ENCODE measurements at regions of chr10 and their contacts with region 1.

Region 1: DNA sequence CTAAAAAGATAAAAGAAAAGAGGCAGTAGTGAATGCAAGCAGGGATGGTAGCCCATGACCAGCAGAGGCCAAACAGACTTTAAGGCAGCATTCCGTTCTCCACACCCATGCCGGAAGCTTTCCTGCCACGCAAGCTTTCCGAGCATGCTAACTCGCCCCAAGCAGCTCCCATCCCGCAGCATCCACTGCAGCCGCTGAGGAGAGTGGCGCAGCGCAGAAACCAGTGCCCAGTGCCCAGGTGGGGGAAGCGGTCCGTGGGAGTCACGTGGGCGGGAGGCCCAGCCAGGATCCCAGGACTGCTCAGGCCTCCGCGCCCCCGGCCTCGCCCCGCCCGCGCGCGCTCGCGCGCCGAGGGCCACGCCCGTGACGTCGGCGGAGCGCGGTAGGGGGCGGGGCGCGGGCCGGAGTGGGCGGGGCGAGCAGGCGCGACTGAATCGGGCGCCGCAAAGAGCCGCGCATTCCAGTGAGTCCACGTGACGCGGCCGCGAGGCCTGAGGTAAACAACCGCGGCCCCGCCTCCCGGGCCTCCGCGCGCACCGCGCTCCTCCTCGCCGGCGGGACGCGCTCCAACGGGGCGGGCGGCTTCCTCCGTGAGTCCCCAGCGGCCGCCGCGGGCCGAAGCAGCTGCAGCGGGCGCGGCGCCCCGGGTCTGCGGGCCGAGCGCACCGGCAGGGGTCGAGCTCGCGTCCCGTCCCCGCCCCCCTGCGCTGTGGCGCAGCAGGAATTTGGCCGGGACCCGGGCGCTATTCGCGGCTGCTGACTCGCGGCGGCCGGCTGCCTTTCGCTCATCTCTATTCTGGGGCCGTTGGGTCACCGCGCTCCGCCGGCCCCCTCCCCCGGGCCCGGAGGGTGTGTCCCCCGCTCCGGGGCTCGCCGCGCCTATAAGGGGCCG is at the start of gene OTUD1:
- DNase-seq: peak; percentile 96
- H3K4me3 ChIP-seq: peak within 1 kb of the TSS; percentile 93
- H3K27ac ChIP-seq: peak within 1 kb of the TSS; percentile 45
- H3K4me1 ChIP-seq: peaks cover 32% of the 10 kb centered on the region
- CTCF ChIP-seq: no peak
- total RNA-seq, gene OTUD1: 4.5 and 5.5 TPM in 2 replicates

Region 2: GRCh38 chr10:23368816-23369640 is 69.8 kb before region 1 on chr10:
- CTCF ChIA-PET with region 1: interaction called, 3 read pairs
- POLR2A ChIA-PET with region 1: interaction called, 4 read pairs
- intact Hi-C with region 1: loop called (anchors 2 kb)
- DNase-seq: peak; percentile 87
- H3K4me3 ChIP-seq: peak overlapping the region; percentile 54
- H3K27ac ChIP-seq: peak overlapping the region; percentile 80
- H3K4me1 ChIP-seq: peaks cover 38% of the 10 kb centered on the region
- CTCF ChIP-seq: no peak

Region 3: DNA sequence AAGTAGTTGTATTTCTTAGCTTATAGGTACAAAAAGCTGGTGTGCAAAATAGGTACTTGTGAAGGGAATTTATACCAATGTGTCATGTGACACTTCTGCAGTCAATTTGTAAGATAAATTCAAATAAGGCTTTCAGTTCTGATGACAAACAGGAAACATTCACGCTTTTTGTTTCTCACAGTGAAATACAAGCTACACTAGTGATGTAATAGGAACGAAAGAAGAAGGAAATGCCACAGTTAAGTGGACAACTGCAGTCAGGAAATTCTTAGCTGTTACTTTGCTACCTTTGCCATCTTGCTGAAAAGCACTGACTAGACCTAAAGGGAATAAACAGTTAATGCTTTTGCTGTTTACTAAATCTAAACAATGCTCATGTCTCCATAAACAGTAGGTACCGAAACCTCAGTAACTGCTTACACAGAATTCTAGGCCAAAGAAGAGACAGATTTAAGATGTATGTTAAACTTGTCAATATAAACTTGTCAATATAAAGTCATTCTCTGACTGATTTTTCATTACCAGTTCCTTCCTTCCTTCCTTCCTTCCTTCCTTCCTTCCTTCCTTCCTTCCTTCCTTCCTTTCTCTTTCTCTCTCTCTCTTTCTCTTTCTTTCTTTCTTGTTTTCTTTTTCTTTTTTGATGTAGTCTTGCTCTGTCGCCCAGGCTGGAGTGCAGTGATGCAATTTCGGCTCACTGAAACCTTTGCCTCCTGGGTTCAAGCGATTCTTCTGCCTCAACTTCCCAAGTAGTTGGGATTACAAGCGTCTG is 10.2 kb after region 1 on chr10:
- CTCF ChIA-PET with region 1: no interaction called
- POLR2A ChIA-PET with region 1: interaction called, 22 read pairs
- intact Hi-C with region 1: no loop called
- DNase-seq: peak; percentile 68
- H3K4me3 ChIP-seq: peak overlapping the region; percentile 30
- H3K27ac ChIP-seq: peak overlapping the region; percentile 38
- H3K4me1 ChIP-seq: peaks cover 41% of the 10 kb centered on the region
- CTCF ChIP-seq: no peak

Region 4: GRCh38 chr10:23525406-23525805 is 86.6 kb after region 1 on chr10:
- CTCF ChIA-PET with region 1: no interaction called
- POLR2A ChIA-PET with region 1: no interaction called
- intact Hi-C with region 1: loop called (anchors 5 kb)
- DNase-seq: peak; percentile 22
- H3K4me3 ChIP-seq: no peak overlapping the region
- H3K27ac ChIP-seq: no peak overlapping the region
- H3K4me1 ChIP-seq: peaks cover 14% of the 10 kb centered on the region
- CTCF ChIP-seq: peak; percentile 70

Measured in OCI-LY7 (cell line).